ENCODE measurements at regions of chr2 and their contacts with region 1.

Region 1: GRCh38 chr2:118882709-118883210 is 35.3 kb upstream of the EN1 start:
- DNase-seq: peak; percentile 74
- H3K4me3 Mint-ChIP-seq: no peak overlapping the region
- H3K27ac Mint-ChIP-seq: no peak overlapping the region
- H3K4me1 Mint-ChIP-seq: peaks cover 10% of the 10 kb centered on the region
- H3K27me3 Mint-ChIP-seq: no peaks in the 10 kb centered on the region
- CTCF ChIP-seq: peak; percentile 97

Region 2: DNA sequence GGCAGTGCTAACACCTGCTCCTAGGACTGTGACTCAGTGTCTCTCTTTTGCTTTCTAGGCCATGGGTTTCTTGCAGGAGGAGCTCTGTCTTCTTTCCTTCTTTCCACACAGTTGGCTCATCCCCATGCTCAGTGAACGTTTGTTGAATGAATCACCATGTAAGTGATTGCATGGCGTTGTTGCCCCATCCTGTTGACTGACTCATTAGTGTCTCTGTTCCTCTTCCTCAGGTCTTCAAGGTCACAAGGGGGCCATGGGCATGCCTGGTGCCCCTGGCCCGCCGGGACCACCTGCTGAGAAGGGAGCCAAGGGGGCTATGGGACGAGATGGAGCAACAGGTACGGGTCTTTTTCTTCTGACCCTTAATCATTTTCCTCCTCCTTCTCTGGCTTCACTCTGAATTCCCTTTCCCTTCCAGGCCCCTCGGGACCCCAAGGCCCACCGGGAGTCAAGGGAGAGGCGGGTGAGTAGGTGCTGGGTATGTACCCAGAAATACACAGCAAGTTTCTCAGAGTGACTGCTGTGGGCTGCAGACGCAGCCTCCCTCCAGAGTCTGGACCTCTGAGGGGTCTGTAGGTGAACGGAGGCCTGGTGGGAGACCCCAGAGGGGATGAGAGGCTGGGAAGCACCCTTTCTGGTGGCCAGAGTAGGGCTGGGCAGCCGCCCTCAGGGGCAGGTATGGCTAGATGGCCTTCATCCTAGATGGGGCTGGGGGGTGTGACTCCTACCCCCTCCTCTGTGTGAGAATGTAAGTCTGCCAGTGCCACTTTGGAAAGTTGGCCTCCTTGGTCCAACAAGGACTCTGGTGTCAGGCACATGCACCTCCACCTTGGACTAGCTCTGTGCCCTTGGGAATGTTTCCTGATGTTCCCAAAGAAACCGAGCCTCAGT is 91.6 kb after region 1 on chr2:
- CTCF ChIA-PET with region 1: interaction called, 15 read pairs
- POLR2A ChIA-PET with region 1: no interaction called
- intact Hi-C with region 1: no loop called
- DNase-seq: peak; percentile 98
- H3K4me3 Mint-ChIP-seq: peak overlapping the region; percentile 28
- H3K27ac Mint-ChIP-seq: peak overlapping the region; percentile 53
- H3K4me1 Mint-ChIP-seq: peaks cover 39% of the 10 kb centered on the region
- H3K27me3 Mint-ChIP-seq: no peaks in the 10 kb centered on the region
- CTCF ChIP-seq: no peak

Region 3: GRCh38 chr2:119049968-119050704 is 167.4 kb after region 1 on chr2:
- CTCF ChIA-PET with region 1: interaction called, 6 read pairs
- POLR2A ChIA-PET with region 1: no interaction called
- intact Hi-C with region 1: loop called (anchors 1 kb)
- DNase-seq: peak; percentile 14
- H3K4me3 Mint-ChIP-seq: no peak overlapping the region
- H3K27ac Mint-ChIP-seq: no peak overlapping the region
- H3K4me1 Mint-ChIP-seq: no peaks in the 10 kb centered on the region
- H3K27me3 Mint-ChIP-seq: peaks cover 94% of the 10 kb centered on the region
- CTCF ChIP-seq: no peak

Region 4: GRCh38 chr2:119184512-119184911 is 301.8 kb after region 1 on chr2:
- CTCF ChIA-PET with region 1: interaction called, 15 read pairs
- POLR2A ChIA-PET with region 1: no interaction called
- intact Hi-C with region 1: no loop called
- DNase-seq: peak; percentile 74
- H3K4me3 Mint-ChIP-seq: no peak overlapping the region
- H3K27ac Mint-ChIP-seq: peak overlapping the region; percentile 41
- H3K4me1 Mint-ChIP-seq: peaks cover 7% of the 10 kb centered on the region
- H3K27me3 Mint-ChIP-seq: no peaks in the 10 kb centered on the region
- CTCF ChIP-seq: no peak

Region 5: GRCh38 chr2:119259296-119259860 is 376.6 kb after region 1 on chr2:
- CTCF ChIA-PET with region 1: interaction called, 119 read pairs
- POLR2A ChIA-PET with region 1: interaction called, 4 read pairs
- intact Hi-C with region 1: no loop called
- DNase-seq: no peak
- H3K4me3 Mint-ChIP-seq: no peak overlapping the region
- H3K27ac Mint-ChIP-seq: no peak overlapping the region
- H3K4me1 Mint-ChIP-seq: no peaks in the 10 kb centered on the region
- H3K27me3 Mint-ChIP-seq: no peaks in the 10 kb centered on the region
- CTCF ChIP-seq: no peak

Region 6: GRCh38 chr2:119301413-119301812 is 418.7 kb after region 1 on chr2:
- CTCF ChIA-PET with region 1: interaction called, 16 read pairs
- POLR2A ChIA-PET with region 1: no interaction called
- intact Hi-C with region 1: no loop called
- DNase-seq: no peak
- H3K4me3 Mint-ChIP-seq: no peak overlapping the region
- H3K27ac Mint-ChIP-seq: no peak overlapping the region
- H3K4me1 Mint-ChIP-seq: no peaks in the 10 kb centered on the region
- H3K27me3 Mint-ChIP-seq: no peaks in the 10 kb centered on the region
- CTCF ChIP-seq: no peak